T-cell (primary cell): ENCODE measurements at regions of chr6 and their contacts with region 1.

Region 1: DNA sequence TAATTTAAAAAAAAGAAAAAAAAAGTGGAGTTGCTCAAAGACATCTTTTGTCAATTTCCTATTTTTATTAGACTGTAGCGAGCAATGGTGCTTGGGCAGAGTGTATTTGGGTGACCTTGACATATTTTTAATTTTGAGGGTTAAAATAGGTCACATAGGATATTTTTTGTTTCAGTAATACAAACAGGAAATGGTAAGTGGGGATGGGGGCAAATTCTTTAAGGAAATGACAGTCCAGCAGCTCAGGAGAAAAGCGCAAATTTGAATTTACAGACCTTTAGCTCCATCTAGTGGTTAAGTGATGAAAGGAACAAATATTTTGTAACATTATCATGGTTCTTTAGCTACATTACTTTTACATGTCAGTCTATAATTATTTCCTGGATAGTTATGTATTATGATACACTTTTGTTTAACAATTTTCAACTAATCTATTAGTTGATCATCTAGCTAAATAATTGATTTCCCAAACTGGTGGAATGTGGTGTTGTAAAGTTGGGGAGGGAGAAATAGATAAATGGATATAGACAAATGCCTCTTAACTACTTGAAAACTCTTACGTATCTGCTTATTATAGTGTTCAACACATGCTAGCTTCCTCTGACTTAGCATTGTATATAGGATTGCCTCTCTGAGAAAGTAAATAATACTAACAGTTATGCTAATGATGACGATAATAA is 10.0 kb downstream of the CITED2 start:
- DNase-seq: peak in 2 of 35 experiments; percentile 18 to 73
- ATAC-seq: peak; percentile 33 to 62 (median 53)
- H3K4me3 ChIP-seq: no peak overlapping the region
- H3K4me3 Mint-ChIP-seq: no peak overlapping the region
- H3K27ac ChIP-seq: no peak overlapping the region
- H3K27ac Mint-ChIP-seq: peak overlapping the region in 1 of 2 donors; percentile 58
- H3K4me1 ChIP-seq: peaks cover 0 to 19% of the 10 kb centered on the region in 2 experiments
- H3K4me1 Mint-ChIP-seq: peaks cover 35 to 53% (median 48%) of the 10 kb centered on the region in 3 donors
- H3K27me3 ChIP-seq: no peaks in the 10 kb centered on the region
- H3K27me3 Mint-ChIP-seq: no peaks in the 10 kb centered on the region

Region 2: GRCh38 chr6:138088330-138088766 is 1276.1 kb before region 1 on chr6:
- CTCF ChIA-PET with region 1: no interaction called
- POLR2A ChIA-PET with region 1: no interaction called
- DNase-seq: no peak
- ATAC-seq: no peak
- H3K4me3 ChIP-seq: no peak overlapping the region
- H3K4me3 Mint-ChIP-seq: no peak overlapping the region
- H3K27ac ChIP-seq: no peak overlapping the region
- H3K27ac Mint-ChIP-seq: no peak overlapping the region
- H3K4me1 ChIP-seq: no peaks in the 10 kb centered on the region
- H3K4me1 Mint-ChIP-seq: no peaks in the 10 kb centered on the region
- H3K27me3 ChIP-seq: no peaks in the 10 kb centered on the region
- H3K27me3 Mint-ChIP-seq: peaks cover 2 to 26% of the 10 kb centered on the region in 2 donors

Region 3: DNA sequence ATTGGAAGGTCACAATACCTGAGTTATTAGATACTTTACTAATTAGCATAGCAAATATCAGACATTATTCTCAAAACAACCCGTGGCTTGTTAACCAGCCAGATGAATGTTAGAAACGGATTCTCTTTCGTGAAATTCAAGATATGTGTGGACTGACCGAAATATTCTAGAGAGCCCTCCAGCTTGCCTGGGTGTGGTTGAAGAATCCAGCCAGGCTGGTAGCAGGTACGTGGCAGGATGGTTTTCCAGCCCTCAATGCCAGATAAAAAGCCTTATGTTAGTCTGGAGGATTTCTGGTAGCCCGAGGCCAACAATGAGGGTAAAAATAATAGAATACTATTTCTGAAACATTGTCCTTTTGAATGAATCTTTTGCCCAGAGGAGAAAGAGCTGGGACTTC is 549.2 kb before region 1 on chr6:
- CTCF ChIA-PET with region 1: interaction called, 8 to 16 read pairs
- POLR2A ChIA-PET with region 1: no interaction called
- DNase-seq: no peak
- ATAC-seq: no peak
- H3K4me3 ChIP-seq: no peak overlapping the region
- H3K4me3 Mint-ChIP-seq: no peak overlapping the region
- H3K27ac ChIP-seq: no peak overlapping the region
- H3K27ac Mint-ChIP-seq: no peak overlapping the region
- H3K4me1 ChIP-seq: no peaks in the 10 kb centered on the region
- H3K4me1 Mint-ChIP-seq: peaks cover 5 to 14% (median 6%) of the 10 kb centered on the region in 3 donors
- H3K27me3 ChIP-seq: no peaks in the 10 kb centered on the region
- H3K27me3 Mint-ChIP-seq: no peaks in the 10 kb centered on the region

Region 4: DNA sequence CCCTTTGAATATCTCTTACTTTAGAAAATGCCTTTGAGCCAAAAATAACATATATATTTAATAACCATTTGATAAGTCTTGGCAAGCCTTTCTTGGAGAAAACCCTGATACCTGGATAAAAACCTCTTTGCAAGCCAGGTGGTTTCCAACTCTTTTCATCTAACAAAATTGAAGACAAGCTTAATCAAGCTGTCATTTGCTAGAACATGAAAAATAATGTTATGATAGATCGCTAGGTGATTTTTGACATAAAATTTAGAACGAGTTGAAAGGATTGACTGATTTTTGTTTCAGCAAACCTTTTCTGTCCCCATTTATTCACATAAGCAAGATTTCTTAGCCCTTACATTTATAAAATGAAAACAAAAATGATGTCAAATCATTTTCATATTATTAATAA is 291.3 kb before region 1 on chr6:
- CTCF ChIA-PET with region 1: no interaction called
- POLR2A ChIA-PET with region 1: no interaction called
- DNase-seq: no peak
- ATAC-seq: no peak
- H3K4me3 ChIP-seq: no peak overlapping the region
- H3K4me3 Mint-ChIP-seq: no peak overlapping the region
- H3K27ac ChIP-seq: no peak overlapping the region
- H3K27ac Mint-ChIP-seq: no peak overlapping the region
- H3K4me1 ChIP-seq: no peaks in the 10 kb centered on the region
- H3K4me1 Mint-ChIP-seq: no peaks in the 10 kb centered on the region
- H3K27me3 ChIP-seq: no peaks in the 10 kb centered on the region
- H3K27me3 Mint-ChIP-seq: no peaks in the 10 kb centered on the region

Region 5: GRCh38 chr6:139124887-139125672 is 239.4 kb before region 1 on chr6:
- CTCF ChIA-PET with region 1: interaction called, 10 to 42 read pairs
- POLR2A ChIA-PET with region 1: interaction called in 1 of 2 experiments, 4 read pairs
- DNase-seq: peak; percentile 59 to 91 (median 78)
- ATAC-seq: peak; percentile 98 to 99 (median 98)
- H3K4me3 ChIP-seq: no peak overlapping the region
- H3K4me3 Mint-ChIP-seq: peak overlapping the region; percentile 45 to 69 (median 52)
- H3K27ac ChIP-seq: peak overlapping the region; percentile 83
- H3K27ac Mint-ChIP-seq: peak overlapping the region; percentile 92 to 97
- H3K4me1 ChIP-seq: peaks cover 23 to 26% of the 10 kb centered on the region in 2 experiments
- H3K4me1 Mint-ChIP-seq: peaks cover 57 to 67% (median 61%) of the 10 kb centered on the region in 3 donors
- H3K27me3 ChIP-seq: no peaks in the 10 kb centered on the region
- H3K27me3 Mint-ChIP-seq: no peaks in the 10 kb centered on the region

Region 6: DNA sequence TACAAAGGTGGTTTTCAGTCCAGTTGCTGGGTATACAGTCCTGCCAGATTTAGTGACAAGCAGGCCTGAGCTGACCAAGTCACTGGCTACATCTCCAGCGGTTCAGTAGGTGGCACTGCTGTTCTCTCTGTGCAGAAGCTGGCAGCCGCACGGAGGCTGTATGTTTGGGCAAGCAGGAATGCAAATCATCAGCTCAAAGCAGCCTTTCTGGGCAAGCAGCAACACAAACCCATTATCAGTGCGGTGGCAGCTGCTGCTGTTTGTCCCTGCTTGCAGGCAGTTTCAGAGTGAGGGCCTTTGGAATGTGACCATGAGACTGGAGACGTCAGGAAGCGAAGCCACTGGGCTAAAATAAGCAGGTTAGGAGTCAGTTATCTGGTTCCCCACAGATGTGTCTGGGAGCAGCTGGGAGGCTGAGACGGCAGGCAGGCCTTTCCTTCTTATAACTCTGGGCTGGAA is 145.1 kb before region 1 on chr6:
- CTCF ChIA-PET with region 1: interaction called, 33 to 145 read pairs
- POLR2A ChIA-PET with region 1: interaction called in 1 of 2 experiments, 11 read pairs
- DNase-seq: peak; percentile 40 to 82 (median 63)
- ATAC-seq: peak; percentile 99 to 100 (median 100)
- H3K4me3 ChIP-seq: no peak overlapping the region
- H3K4me3 Mint-ChIP-seq: peak overlapping the region; percentile 12 to 44 (median 41)
- H3K27ac ChIP-seq: peak overlapping the region; percentile 10
- H3K27ac Mint-ChIP-seq: peak overlapping the region; percentile 95 to 97
- H3K4me1 ChIP-seq: peaks cover 0 to 7% of the 10 kb centered on the region in 2 experiments
- H3K4me1 Mint-ChIP-seq: peaks cover 8 to 11% (median 10%) of the 10 kb centered on the region in 3 donors
- H3K27me3 ChIP-seq: no peaks in the 10 kb centered on the region
- H3K27me3 Mint-ChIP-seq: no peaks in the 10 kb centered on the region

Region 7: DNA sequence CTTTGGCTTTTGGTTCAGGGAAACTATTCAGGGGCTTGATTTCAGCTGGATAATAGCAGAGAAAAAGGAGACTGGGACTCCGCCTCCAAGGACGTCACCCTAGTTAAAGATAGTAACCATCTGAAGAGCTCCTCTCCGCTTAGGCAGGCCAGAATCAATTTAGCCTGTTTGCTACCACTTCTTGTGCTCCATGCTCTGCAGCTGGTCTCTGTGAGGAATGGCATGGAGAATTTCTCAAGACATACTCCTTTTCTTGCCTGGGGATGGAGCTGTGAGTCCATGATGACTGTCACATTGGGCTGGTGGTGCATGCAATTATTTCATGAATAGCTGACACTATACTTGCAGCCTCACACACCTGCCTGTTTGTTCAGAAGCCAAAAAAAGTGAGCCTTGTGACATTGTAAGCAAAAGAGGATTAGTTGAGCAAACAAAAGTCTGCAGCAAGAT is 134.0 kb before region 1 on chr6:
- CTCF ChIA-PET with region 1: interaction called, 12 to 22 read pairs
- POLR2A ChIA-PET with region 1: no interaction called
- DNase-seq: peak in 5 of 35 experiments; percentile 3 to 31 (median 9)
- ATAC-seq: peak in 3 of 4 experiments; percentile 51 to 62 (median 58)
- H3K4me3 ChIP-seq: no peak overlapping the region
- H3K4me3 Mint-ChIP-seq: no peak overlapping the region
- H3K27ac ChIP-seq: no peak overlapping the region
- H3K27ac Mint-ChIP-seq: no peak overlapping the region
- H3K4me1 ChIP-seq: no peaks in the 10 kb centered on the region
- H3K4me1 Mint-ChIP-seq: peaks cover 8 to 16% (median 9%) of the 10 kb centered on the region in 3 donors
- H3K27me3 ChIP-seq: no peaks in the 10 kb centered on the region
- H3K27me3 Mint-ChIP-seq: no peaks in the 10 kb centered on the region

Region 8: DNA sequence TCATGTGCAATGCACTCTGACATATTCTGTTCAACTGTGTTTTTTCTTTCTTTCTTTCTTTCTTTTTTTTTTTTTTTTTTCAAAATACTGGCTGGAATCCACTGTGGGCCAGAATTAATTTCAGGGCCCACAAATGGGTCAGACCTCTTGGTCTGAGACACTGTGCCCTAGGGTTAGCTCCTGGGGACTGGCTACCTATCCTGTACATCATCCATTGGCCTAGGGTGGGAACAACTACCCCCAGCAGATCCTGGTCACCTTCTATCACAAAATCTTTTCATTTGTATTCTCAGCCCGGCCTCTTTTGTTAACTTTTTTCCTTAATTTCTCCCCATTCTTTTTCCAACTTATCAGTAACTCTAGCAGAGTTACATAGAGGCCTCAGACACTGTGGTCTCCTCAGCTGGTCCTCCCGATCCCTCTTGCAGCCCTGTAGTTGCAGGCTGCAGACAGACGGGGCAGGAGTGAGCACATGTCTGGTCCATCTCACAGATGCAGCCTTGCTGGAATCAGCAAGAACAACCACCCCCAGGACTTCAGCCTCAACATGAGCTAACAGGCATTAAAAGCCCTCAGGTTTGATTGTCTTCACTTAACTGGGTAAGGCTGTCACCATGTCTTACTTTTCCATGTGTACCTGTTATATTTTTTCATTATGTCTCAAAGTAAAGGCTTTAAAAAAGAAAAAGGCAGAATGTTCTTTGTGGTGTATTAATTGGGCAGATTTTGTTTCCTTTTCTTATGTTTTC is 114.0 kb before region 1 on chr6:
- CTCF ChIA-PET with region 1: interaction called, 4 to 10 read pairs
- POLR2A ChIA-PET with region 1: no interaction called
- DNase-seq: peak in 34 of 35 experiments; percentile 18 to 75 (median 42)
- ATAC-seq: peak; percentile 84 to 92 (median 88)
- H3K4me3 ChIP-seq: no peak overlapping the region
- H3K4me3 Mint-ChIP-seq: peak overlapping the region in 2 of 3 donors; percentile 18 to 61
- H3K27ac ChIP-seq: peak overlapping the region; percentile 64
- H3K27ac Mint-ChIP-seq: peak overlapping the region; percentile 92 to 95
- H3K4me1 ChIP-seq: peaks cover 12 to 29% of the 10 kb centered on the region in 2 experiments
- H3K4me1 Mint-ChIP-seq: peaks cover 39 to 51% (median 47%) of the 10 kb centered on the region in 3 donors
- H3K27me3 ChIP-seq: no peaks in the 10 kb centered on the region
- H3K27me3 Mint-ChIP-seq: no peaks in the 10 kb centered on the region

Region 9: GRCh38 chr6:139291813-139292619 is 72.4 kb before region 1 on chr6 and contains the start of gene TXLNB:
- CTCF ChIA-PET with region 1: interaction called, 4 to 14 read pairs
- POLR2A ChIA-PET with region 1: interaction called in 1 of 2 experiments, 3 read pairs
- DNase-seq: peak; percentile 51 to 91 (median 79)
- ATAC-seq: peak; percentile 87 to 97 (median 94)
- H3K4me3 ChIP-seq: peak within 1 kb of the TSS in 1 of 2 donors; percentile 44
- H3K4me3 Mint-ChIP-seq: peak within 1 kb of the TSS; percentile 67 to 78 (median 77)
- H3K27ac ChIP-seq: peak within 1 kb of the TSS; percentile 95
- H3K27ac Mint-ChIP-seq: peak within 1 kb of the TSS; percentile 97 to 98
- H3K4me1 ChIP-seq: peaks cover 30 to 34% of the 10 kb centered on the region in 2 experiments
- H3K4me1 Mint-ChIP-seq: peaks cover 63 to 78% (median 74%) of the 10 kb centered on the region in 3 donors
- H3K27me3 ChIP-seq: no peaks in the 10 kb centered on the region
- H3K27me3 Mint-ChIP-seq: no peaks in the 10 kb centered on the region
- total RNA-seq, gene TXLNB: 0.41 to 0.92 (median 0.72) TPM

Region 10: DNA sequence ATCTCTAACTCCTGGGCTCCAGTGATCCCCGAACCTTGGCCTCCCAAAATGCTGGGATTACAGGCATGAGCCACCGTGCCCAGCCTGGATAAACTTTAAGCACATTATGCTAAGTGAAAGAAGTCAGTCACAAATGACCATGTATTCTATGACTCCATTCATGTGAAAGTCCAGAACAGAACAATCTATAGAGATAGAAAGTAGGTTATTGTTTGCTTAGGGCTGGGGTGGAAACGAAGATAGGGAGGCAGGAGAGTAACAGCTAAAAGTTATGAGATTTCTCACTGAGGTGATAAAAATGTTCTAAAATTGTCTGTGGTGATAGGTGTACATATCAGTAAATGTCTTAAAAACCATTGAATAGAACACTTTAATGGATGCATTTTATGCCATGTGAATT is 50.9 kb after region 1 on chr6:
- CTCF ChIA-PET with region 1: no interaction called
- POLR2A ChIA-PET with region 1: no interaction called
- DNase-seq: no peak
- ATAC-seq: no peak
- H3K4me3 ChIP-seq: no peak overlapping the region
- H3K4me3 Mint-ChIP-seq: no peak overlapping the region
- H3K27ac ChIP-seq: no peak overlapping the region
- H3K27ac Mint-ChIP-seq: no peak overlapping the region
- H3K4me1 ChIP-seq: no peaks in the 10 kb centered on the region
- H3K4me1 Mint-ChIP-seq: no peaks in the 10 kb centered on the region
- H3K27me3 ChIP-seq: peaks cover 0 to 3% of the 10 kb centered on the region in 2 experiments
- H3K27me3 Mint-ChIP-seq: peaks cover 2 to 7% of the 10 kb centered on the region in 2 donors